Activated CD4-positive, alpha-beta memory T cell treated with anti-CD3 and anti-CD28 coated beads for 36 hours (primary cell): ENCODE measurements at regions of chr16 and their contacts with region 1.

Region 1: GRCh38 chr16:3282730-3283524 is at the start of gene ZNF263:
- DNase-seq: peak; percentile 96
- H3K4me3 Mint-ChIP-seq: peak within 1 kb of the TSS; percentile 91
- H3K27ac Mint-ChIP-seq: peak within 1 kb of the TSS; percentile 99
- H3K4me1 Mint-ChIP-seq: peaks cover 31% of the 10 kb centered on the region
- H3K27me3 Mint-ChIP-seq: no peaks in the 10 kb centered on the region
- total RNA-seq, gene ZNF263: 13.2 to 13.5 TPM

Region 2: GRCh38 chr16:3214904-3215600 is 67.9 kb before region 1 on chr16:
- CTCF ChIA-PET with region 1: no interaction called
- POLR2A ChIA-PET with region 1: interaction called, 8 read pairs
- intact Hi-C with region 1: loop called (anchors 1 kb)
- DNase-seq: peak; percentile 69
- H3K4me3 Mint-ChIP-seq: peak overlapping the region; percentile 56
- H3K27ac Mint-ChIP-seq: peak overlapping the region; percentile 99
- H3K4me1 Mint-ChIP-seq: peaks cover 44% of the 10 kb centered on the region
- H3K27me3 Mint-ChIP-seq: no peaks in the 10 kb centered on the region

Region 3: GRCh38 chr16:3295209-3295608 is 12.3 kb after region 1 on chr16:
- CTCF ChIA-PET with region 1: no interaction called
- POLR2A ChIA-PET with region 1: no interaction called
- intact Hi-C with region 1: no loop called
- DNase-seq: no peak
- H3K4me3 Mint-ChIP-seq: no peak overlapping the region
- H3K27ac Mint-ChIP-seq: no peak overlapping the region
- H3K4me1 Mint-ChIP-seq: peaks cover 3% of the 10 kb centered on the region
- H3K27me3 Mint-ChIP-seq: no peaks in the 10 kb centered on the region

Region 4: DNA sequence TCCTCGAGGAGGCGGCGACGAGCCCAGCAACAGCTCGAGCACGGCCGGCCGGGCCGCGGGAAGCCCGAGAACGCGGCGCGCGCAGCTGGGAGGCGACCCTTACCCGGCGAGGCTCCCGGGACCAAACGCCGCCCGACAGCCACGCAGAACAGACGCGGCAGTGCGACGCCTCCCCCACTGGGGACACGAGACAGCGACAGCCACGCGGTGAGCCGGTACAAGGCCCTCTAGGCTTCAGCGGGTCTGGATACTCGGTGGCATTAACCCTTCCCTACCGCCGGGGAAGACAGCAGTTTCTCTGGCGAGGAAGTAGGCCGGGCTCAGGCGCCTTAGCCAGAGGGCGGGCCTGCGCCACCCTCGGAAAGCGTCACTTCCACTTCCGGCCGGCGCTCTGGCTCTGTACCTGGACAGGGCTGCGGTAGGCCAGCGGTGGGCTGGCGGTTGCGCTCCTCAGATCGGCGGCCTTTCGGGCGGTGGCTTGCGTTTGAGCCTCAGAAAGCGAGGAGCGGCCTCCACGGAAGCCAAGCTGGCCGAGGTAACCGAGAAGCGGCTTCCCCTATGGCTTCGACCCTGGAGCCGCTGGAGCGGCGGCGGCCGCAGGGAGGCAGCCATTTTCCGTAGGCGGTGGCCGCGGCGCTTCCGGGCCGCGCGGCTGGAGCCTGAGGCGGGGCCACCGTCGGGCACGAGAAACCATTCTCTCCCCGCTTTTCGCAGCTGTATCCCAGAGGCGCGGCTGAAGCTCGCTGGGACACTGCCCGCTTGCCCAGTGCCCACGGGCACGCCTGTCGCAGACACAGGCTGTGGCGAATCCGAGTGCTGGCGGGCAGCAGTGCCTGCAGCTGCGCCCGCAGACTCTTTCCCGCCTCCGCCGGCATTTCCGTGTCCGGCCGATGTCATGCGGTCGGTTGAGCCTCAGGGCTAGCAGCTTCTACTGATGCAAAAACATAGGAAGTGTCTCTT is 22.5 kb after region 1 on chr16 and contains the starts of genes TIGD7 and ZNF75A:
- CTCF ChIA-PET with region 1: interaction called, 4 read pairs
- POLR2A ChIA-PET with region 1: interaction called, 19 read pairs
- intact Hi-C with region 1: loop called (anchors 1 kb)
- DNase-seq: peak; percentile 88
- H3K4me3 Mint-ChIP-seq: peak within 1 kb of the TSS; percentile 71
- H3K27ac Mint-ChIP-seq: peak within 1 kb of the TSS; percentile 79
- H3K4me1 Mint-ChIP-seq: peaks cover 12% of the 10 kb centered on the region
- H3K27me3 Mint-ChIP-seq: no peaks in the 10 kb centered on the region
- total RNA-seq, gene TIGD7: 3.3 to 3.4 TPM
- total RNA-seq, gene ZNF75A: 19.3 to 20.0 TPM

Region 5: DNA sequence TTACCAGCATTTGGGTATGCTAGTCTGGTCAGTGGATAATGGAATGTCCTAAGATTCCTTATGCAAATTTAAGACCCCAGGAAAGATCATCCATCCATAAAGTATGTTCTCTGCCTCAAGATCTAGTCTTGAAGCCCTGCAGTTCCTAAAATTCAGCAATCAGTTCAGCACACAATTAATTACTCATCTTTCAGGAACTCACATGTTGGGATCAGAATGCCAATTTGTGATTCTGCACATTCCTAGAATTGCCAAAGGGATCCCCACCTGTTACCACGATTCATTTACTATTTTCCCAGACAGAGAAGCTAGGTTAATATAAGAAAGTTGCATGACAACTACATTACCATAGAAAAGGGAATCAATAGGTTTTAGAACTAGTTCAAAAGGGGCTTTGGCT is 76.0 kb after region 1 on chr16:
- CTCF ChIA-PET with region 1: no interaction called
- POLR2A ChIA-PET with region 1: no interaction called
- intact Hi-C with region 1: no loop called
- DNase-seq: no peak
- H3K4me3 Mint-ChIP-seq: no peak overlapping the region
- H3K27ac Mint-ChIP-seq: no peak overlapping the region
- H3K4me1 Mint-ChIP-seq: peaks cover 4% of the 10 kb centered on the region
- H3K27me3 Mint-ChIP-seq: peaks cover 5% of the 10 kb centered on the region

Region 6: DNA sequence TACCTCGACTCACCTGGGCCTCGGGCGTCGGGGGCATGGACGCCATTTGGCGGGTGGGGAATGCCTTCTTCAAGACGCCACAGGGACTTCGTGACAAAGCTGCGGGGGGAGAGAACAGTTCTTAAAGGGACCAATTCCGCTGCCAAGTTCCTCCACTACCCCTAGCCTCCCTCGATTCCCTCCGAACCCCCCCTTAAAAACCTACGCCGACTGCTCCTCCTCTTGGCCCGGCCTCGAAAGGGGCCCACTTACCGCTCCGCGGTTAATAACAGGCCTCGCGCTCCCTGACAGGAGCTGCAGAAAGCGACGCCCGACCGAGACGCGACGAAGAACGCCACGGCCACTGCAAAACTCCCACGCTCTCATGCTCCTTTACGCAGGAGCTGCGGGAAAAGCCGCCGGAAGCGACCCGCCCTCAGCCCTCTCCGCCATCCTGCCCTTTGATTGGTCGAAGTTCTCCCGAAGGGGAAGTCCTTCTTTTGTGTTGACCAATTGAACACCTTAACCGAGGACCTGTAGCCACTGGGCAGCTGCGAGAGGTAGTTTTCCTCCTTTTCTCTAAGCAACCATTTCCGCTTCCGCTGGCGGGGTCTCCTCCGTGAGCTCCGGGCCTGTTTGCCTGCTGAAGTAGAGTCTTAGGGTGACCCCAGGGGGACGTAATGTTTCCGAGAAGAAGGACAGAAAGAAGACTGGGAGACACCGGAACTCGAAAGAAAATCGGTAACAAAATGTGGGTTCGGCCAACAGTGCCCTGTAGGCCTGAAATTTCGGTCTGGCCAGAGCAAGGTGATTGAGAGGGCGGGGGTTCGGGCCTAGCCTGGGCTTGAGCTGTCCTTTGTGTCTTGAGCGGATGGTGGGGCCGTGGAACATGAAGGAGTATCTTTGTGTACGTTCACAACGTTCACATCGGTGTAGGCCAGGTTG is 160.4 kb after region 1 on chr16 and contains the starts of genes NAA60 and ZNF597:
- CTCF ChIA-PET with region 1: no interaction called
- POLR2A ChIA-PET with region 1: interaction called, 3 read pairs
- intact Hi-C with region 1: loop called (anchors 2 kb)
- DNase-seq: peak; percentile 89
- H3K4me3 Mint-ChIP-seq: peak within 1 kb of the TSS; percentile 97
- H3K27ac Mint-ChIP-seq: peak within 1 kb of the TSS; percentile 95
- H3K4me1 Mint-ChIP-seq: peaks cover 15% of the 10 kb centered on the region
- H3K27me3 Mint-ChIP-seq: no peaks in the 10 kb centered on the region
- total RNA-seq, gene NAA60: 26.9 to 34.1 TPM
- total RNA-seq, gene ZNF597: 1.6 to 2.1 TPM

Region 7: GRCh38 chr16:3503523-3503922 is 220.6 kb after region 1 on chr16:
- CTCF ChIA-PET with region 1: no interaction called
- POLR2A ChIA-PET with region 1: no interaction called
- intact Hi-C with region 1: loop called (anchors 2 kb)
- DNase-seq: peak; percentile 75
- H3K4me3 Mint-ChIP-seq: peak overlapping the region; percentile 65
- H3K27ac Mint-ChIP-seq: peak overlapping the region; percentile 84
- H3K4me1 Mint-ChIP-seq: peaks cover 62% of the 10 kb centered on the region
- H3K27me3 Mint-ChIP-seq: no peaks in the 10 kb centered on the region